PC-3 (cell line): ENCODE measurements at regions of chr18 and their contacts with region 1.

Region 1: DNA sequence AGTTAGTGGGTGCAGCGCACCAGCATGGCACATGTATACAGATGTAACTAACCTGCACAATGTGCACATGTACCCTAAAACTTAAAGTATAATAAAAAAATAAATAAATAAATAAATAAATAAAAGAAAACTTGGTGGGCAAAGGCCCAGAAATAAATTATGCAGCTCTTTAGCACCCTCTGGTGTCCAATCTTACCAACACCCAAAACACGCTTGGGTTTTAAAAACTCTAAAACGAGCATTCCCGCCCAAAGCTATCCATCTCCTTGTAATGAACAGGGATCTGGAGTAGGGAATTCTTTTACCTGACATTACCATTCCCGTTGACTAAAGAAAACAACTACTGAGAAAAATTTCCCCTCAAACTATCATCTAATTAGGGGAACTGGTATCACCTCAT is 2005.9 kb upstream of the CELF4 start:
- DNase-seq: peak; percentile 15
- ATAC-seq: no peak
- H3K4me3 ChIP-seq: no peak overlapping the region
- H3K27ac ChIP-seq: no peak overlapping the region
- H3K4me1 ChIP-seq: no peaks in the 10 kb centered on the region
- H3K27me3 ChIP-seq: no peaks in the 10 kb centered on the region
- CTCF ChIP-seq: 0 out of 2 replicates have a peak, but pooled peaks have one; percentile 14

Region 2: DNA sequence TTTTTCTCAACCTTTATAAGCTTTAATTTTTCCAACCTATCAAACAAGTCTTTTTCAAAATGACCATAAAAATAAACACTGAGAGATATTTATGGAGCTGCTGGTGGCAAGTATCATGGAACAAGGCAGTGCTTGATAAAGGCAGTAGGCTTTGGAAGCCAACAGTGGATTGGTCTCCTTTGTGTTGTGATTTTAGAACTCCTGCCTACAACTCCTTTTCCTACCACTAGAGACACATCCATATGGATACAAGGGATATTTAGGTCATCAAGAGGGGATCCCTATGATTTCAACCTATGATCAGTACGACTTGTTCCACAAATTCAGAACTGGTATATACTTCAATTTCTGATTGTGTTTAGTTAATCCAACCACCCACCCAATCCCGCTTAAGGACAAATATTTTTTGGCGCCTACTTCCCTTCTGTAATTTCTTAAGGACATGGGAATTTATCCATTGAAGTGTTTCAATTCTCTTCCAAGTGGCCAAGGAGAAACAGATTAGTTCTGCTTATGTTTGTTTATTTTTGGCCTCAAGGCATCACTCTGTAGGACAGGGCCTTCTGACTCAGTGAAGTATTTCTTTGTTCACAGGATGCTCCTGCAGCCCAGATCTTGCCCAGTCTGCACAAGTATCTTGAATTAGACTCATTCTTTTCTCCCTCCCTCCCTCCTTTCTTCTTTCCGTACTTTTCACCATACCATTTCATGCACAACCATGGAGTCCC is 264.0 kb after region 1 on chr18:
- CTCF ChIA-PET with region 1: no interaction called
- POLR2A ChIA-PET with region 1: no interaction called
- intact Hi-C with region 1: no loop called
- DNase-seq: no peak
- ATAC-seq: no peak
- H3K4me3 ChIP-seq: no peak overlapping the region
- H3K27ac ChIP-seq: no peak overlapping the region
- H3K4me1 ChIP-seq: no peaks in the 10 kb centered on the region
- H3K27me3 ChIP-seq: no peaks in the 10 kb centered on the region
- CTCF ChIP-seq: no peak

Region 3: DNA sequence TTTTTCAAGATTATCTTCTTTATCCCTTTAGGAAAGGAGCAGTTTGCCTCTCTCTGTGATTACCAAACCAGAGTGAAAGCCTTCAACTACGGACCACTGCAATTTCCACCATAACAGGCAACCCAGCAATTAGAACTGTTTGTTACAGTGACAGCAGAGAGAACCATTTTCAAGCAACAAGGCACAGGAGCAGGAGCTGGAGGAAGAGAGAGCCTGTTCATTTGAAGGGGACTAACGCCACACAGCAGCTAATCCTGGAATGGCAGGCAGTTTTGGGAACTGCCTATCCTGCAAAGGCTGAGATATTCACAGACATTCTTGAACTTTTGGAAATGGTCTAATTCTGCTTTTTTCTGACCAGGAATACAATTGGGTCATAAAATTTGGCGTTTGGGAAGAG is 841.6 kb after region 1 on chr18:
- CTCF ChIA-PET with region 1: no interaction called
- POLR2A ChIA-PET with region 1: no interaction called
- intact Hi-C with region 1: loop called (anchors 10 kb)
- DNase-seq: peak; percentile 48
- ATAC-seq: peak; percentile 68
- H3K4me3 ChIP-seq: no peak overlapping the region
- H3K27ac ChIP-seq: no peak overlapping the region
- H3K4me1 ChIP-seq: 0 out of 2 replicates have a peak, but pooled peaks cover 4% of the 10 kb centered on the region
- H3K27me3 ChIP-seq: no peaks in the 10 kb centered on the region
- CTCF ChIP-seq: peak; percentile 50